MCF 10A (cell line): ENCODE measurements at regions of chr7 and their contacts with region 1.

Region 1: DNA sequence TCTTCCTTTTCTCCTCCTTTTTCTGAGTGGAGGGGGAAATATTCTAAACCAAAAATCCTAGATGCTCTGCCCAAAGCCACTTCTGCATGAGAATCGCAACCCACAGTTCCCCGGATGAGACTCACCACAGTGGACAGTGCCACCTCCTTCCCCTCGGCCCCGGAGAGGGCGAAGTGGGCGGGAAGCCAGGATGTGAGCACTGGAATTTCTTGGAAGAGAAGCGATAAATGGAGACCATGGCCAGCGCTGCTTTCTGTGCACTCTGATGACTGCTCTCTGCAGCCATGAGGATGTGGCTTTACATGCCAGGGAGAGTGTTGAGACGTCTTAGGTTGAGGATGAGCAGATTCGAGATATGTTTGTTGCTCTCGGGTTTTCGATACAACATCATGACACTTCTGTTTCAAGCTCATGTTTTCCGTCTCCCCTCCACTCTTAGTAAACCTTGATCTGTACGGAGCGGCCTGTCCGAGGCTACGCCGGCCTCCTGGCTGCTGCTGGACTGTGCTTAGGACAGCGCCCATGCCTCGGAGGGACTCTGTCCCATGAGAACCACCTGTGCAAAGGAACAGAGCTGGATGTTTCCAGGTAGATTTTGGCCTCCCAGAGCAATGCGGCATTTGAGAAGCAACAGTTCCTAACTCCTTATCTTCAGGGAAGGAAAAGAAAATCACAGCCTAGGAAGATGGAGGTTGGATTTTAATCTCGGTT is 414.6 kb upstream of the FOXK1 start:
- DNase-seq: no peak
- H3K4me3 Mint-ChIP-seq: no peak overlapping the region
- H3K27ac Mint-ChIP-seq: no peak overlapping the region
- H3K4me1 Mint-ChIP-seq: peaks cover 5% of the 10 kb centered on the region
- H3K27me3 Mint-ChIP-seq: no peaks in the 10 kb centered on the region
- CTCF ChIP-seq: no peak

Region 2: GRCh38 chr7:3922175-3922635 is 345.3 kb before region 1 on chr7:
- CTCF ChIA-PET with region 1: no interaction called
- POLR2A ChIA-PET with region 1: no interaction called
- intact Hi-C with region 1: no loop called
- DNase-seq: peak; percentile 85
- H3K4me3 Mint-ChIP-seq: no peak overlapping the region
- H3K27ac Mint-ChIP-seq: no peak overlapping the region
- H3K4me1 Mint-ChIP-seq: peaks cover 8% of the 10 kb centered on the region
- H3K27me3 Mint-ChIP-seq: peaks cover 10% of the 10 kb centered on the region
- CTCF ChIP-seq: peak; percentile 57

Region 3: GRCh38 chr7:4282434-4283223 is 15.1 kb after region 1 on chr7:
- CTCF ChIA-PET with region 1: no interaction called
- POLR2A ChIA-PET with region 1: interaction called, 5 read pairs
- intact Hi-C with region 1: loop called (anchors 1 kb)
- DNase-seq: peak; percentile 95
- H3K4me3 Mint-ChIP-seq: no peak overlapping the region
- H3K27ac Mint-ChIP-seq: peak overlapping the region; percentile 80
- H3K4me1 Mint-ChIP-seq: peaks cover 27% of the 10 kb centered on the region
- H3K27me3 Mint-ChIP-seq: no peaks in the 10 kb centered on the region
- CTCF ChIP-seq: no peak